Astrocyte of the cerebellum (primary cell): ENCODE measurements at regions of chr3 and their contacts with region 1.

Region 1: GRCh38 chr3:193040836-193041672 is 123.4 kb upstream of the MB21D2 start:
- DNase-seq: peak; percentile 13
- H3K4me3 ChIP-seq: no peak overlapping the region
- CTCF ChIP-seq: peak; percentile 28

Region 2: DNA sequence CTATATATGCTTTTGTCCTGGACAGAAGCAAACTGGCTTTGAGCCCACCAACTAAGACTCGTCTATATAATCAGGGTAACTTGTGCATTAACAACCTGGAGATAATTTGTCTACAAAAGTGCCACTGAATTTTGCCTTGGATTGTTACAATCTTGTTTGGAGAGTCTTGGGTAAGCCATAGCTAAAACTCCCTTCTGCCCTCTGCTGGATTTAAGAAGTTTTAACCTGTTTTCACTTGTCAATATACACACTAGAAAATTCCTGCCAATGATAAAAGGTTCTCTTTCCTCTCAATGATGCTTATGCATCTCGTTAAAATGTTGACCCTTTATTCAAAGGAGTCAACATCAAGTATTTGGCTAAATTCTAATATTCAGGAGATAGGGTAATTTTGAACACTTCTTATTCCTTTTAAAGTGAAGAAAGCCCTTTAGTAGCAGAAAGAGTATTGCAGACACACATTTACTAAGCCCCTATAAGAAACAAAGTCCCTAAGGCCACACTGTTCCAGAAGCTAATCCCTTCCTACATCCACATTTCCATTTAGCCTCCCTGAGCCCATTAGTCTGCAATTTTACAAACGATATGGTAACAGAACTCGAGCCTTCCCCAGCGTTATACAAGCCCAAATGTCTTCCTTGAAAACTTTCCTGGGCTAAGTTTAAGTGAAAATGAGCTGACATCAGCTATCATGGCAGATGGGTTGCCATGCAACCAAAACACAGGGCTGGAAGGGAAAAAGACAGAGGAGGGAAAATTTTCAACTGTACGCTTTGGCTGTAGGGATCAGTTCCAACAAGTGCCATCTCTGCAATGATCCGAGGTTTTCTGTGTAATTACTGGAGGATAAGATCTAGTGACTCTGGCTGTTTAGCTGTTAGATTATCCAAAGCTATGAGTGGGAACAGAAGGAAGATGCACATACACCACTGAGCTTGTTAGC is 237.8 kb before region 1 on chr3:
- in situ Hi-C with region 1: loop called (anchors 25 kb)
- DNase-seq: peak; percentile 42
- H3K4me3 ChIP-seq: no peak overlapping the region
- CTCF ChIP-seq: peak; percentile 59

Region 3: DNA sequence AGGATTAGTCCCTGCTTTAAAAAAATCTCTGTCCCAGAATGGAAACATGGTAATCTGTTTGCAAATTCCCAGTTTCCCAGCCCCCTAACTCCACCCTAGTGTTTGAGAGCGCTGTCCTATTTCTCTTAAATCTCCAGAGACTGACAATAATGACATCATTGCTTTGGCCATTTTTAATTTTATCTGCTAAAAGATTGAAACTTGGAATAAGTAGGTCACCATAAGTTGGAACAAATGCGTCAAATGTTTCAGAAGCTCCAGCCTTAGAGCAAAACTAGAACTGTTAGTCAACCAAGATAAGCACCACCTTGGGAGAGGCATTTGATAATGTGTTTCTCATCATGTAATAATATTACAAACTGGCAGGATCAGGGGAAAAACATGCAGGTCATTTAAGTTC is 97.7 kb before region 1 on chr3:
- in situ Hi-C with region 1: no loop called
- DNase-seq: no peak
- H3K4me3 ChIP-seq: no peak overlapping the region
- CTCF ChIP-seq: no peak